ENCODE measurements at regions of chr9 and their contacts with region 1.

Region 1: DNA sequence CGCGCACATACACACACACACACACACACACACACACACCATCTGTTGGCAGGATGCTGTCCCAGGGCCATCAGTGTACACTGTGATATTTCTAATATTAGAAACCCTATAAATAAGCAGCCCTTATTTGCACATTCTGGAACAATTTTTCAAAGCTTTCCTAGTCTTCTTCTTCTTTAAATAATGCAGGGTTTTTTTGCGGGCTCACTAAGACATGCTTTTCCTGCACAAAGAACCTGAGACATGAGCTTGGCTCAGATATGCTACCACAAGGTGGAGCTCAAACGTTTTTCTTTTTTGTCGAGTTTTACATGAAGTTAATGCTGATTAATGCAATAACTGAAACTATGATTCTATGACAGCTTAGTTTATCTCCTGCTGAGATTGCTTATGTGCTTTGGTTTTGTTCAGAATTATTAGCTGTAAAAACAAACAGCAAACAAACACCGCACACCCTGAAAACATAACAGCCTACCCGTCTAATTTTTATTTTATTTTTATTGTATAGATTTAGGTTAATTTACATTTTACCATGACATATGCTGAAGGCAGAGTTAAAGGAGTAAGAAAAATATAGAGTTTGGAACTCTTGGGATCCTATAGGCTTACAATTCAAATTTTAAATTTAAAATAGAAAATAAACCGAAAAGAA is 95.8 kb downstream of the ALDH1A1 start:
- DNase-seq: no peak
- H3K4me3 ChIP-seq: no peak overlapping the region
- H3K27ac ChIP-seq: peak overlapping the region in 1 of 4 donors; percentile 5
- H3K4me1 ChIP-seq: peaks cover 8 to 18% (median 10%) of the 10 kb centered on the region in 3 donors
- H3K27me3 ChIP-seq: no peaks in the 10 kb centered on the region
- CTCF ChIP-seq: peak in 5 of 6 experiments; percentile 47 to 67 (median 48)
- POLR2A ChIP-seq: no peak

Region 2: DNA sequence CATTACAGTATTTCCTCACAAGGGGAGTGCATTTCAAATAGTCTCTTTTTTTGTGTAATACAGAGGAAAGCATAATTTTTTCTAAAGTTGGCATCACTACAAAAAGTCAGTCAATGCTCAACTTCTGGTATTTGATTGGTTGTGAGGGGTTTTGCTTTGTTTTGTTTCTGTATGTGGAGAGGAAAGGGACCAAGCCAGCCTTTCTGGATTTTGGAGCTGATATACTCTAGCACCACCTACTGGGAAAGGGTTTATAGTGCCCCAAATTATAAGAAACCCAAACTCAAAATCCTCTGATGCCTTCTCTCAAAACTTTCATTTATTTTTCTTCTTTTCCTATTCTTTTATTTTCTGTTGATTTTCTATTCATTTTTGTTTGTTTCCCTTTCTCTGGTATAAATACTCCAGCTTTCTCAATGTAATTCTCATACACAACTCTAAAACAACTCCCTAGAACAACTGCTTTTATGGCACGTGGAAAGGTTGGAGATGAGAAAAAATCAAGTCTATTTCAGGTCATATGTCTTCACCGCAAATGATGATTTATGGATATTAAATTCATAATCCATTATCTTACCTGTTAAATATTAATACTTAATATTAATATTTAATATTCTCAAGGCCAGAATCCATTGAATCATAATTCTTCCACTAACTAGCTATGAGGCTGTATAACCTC is 225.0 kb after region 1 on chr9:
- intact Hi-C with region 1: loop called (anchors 10 kb)
- DNase-seq: no peak
- H3K4me3 ChIP-seq: no peak overlapping the region
- H3K27ac ChIP-seq: no peak overlapping the region
- H3K4me1 ChIP-seq: peaks cover 4 to 21% (median 5%) of the 10 kb centered on the region in 3 donors
- H3K27me3 ChIP-seq: no peaks in the 10 kb centered on the region
- CTCF ChIP-seq: peak in 5 of 6 experiments; percentile 62 to 80 (median 73)
- POLR2A ChIP-seq: no peak

Measured in esophagus squamous epithelium (tissue), 5 donors.